Endothelial cell of umbilical vein (primary cell): ENCODE measurements at regions of chr18 and their contacts with region 1.

Region 1: DNA sequence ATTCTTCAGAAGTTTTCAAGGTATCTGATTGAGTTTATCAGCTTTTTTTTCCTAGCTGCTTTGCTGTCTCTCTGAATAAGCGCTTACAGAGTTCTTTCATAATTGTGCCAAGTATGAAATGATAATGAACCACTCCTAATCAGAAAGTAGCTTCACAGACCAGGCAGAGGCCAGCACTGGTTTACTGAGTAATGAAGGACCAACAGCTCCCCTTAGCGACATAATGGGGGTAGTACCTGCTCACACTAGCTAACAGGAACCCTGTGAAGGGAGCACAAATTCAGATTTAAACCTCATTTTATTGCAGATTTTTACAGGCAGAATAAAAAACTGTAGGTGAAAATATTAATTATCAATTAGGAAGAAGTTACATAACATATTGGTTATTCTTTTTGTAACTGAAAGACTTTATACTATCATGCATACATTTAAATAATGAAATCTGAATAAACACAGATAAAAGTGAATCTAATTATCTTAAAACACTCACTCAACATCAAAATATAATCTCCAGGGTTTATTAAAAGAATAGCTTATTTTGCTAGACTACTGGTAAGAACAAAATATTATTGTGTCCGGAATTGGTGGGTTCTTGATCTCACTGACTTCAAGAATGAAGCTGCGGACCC is 53.7 kb upstream of the LRRC30 start:
- DNase-seq: peak; percentile 49
- H3K4me3 ChIP-seq: no peak overlapping the region
- H3K27ac ChIP-seq: no peak overlapping the region
- H3K4me1 ChIP-seq: no peaks in the 10 kb centered on the region
- H3K27me3 ChIP-seq: no peaks in the 10 kb centered on the region
- CTCF ChIP-seq: peak; percentile 46 to 64
- POLR2A ChIP-seq: no peak

Region 2: GRCh38 chr18:6543330-6543908 is 633.8 kb before region 1 on chr18:
- CTCF ChIA-PET with region 1: interaction called, 19 read pairs
- POLR2A ChIA-PET with region 1: no interaction called
- dilution Hi-C with region 1: no loop called
- intact Hi-C with region 1: no loop called
- DNase-seq: peak; percentile 60
- H3K4me3 ChIP-seq: no peak overlapping the region
- H3K27ac ChIP-seq: no peak overlapping the region
- H3K4me1 ChIP-seq: peaks cover 9% of the 10 kb centered on the region
- H3K27me3 ChIP-seq: no peaks in the 10 kb centered on the region
- CTCF ChIP-seq: peak; percentile 23 to 26
- POLR2A ChIP-seq: no peak

Region 3: GRCh38 chr18:7038330-7038851 is 138.8 kb before region 1 on chr18:
- CTCF ChIA-PET with region 1: interaction called, 37 read pairs
- POLR2A ChIA-PET with region 1: no interaction called
- dilution Hi-C with region 1: no loop called
- intact Hi-C with region 1: loop called (anchors 1 kb)
- DNase-seq: peak; percentile 77
- H3K4me3 ChIP-seq: peak overlapping the region in 1 of 3 experiments; percentile 3
- H3K27ac ChIP-seq: no peak overlapping the region
- H3K4me1 ChIP-seq: no peaks in the 10 kb centered on the region
- H3K27me3 ChIP-seq: no peaks in the 10 kb centered on the region
- CTCF ChIP-seq: peak; percentile 50 to 69
- POLR2A ChIP-seq: no peak

Region 4: GRCh38 chr18:7165846-7166393 is 11.3 kb before region 1 on chr18:
- CTCF ChIA-PET with region 1: interaction called, 10 read pairs
- POLR2A ChIA-PET with region 1: no interaction called
- dilution Hi-C with region 1: no loop called
- intact Hi-C with region 1: no loop called
- DNase-seq: no peak
- H3K4me3 ChIP-seq: no peak overlapping the region
- H3K27ac ChIP-seq: no peak overlapping the region
- H3K4me1 ChIP-seq: no peaks in the 10 kb centered on the region
- H3K27me3 ChIP-seq: no peaks in the 10 kb centered on the region
- CTCF ChIP-seq: no peak
- POLR2A ChIP-seq: no peak